OCI-LY7 (cell line): ENCODE measurements at regions of chr4 and their contacts with region 1.

Region 1: DNA sequence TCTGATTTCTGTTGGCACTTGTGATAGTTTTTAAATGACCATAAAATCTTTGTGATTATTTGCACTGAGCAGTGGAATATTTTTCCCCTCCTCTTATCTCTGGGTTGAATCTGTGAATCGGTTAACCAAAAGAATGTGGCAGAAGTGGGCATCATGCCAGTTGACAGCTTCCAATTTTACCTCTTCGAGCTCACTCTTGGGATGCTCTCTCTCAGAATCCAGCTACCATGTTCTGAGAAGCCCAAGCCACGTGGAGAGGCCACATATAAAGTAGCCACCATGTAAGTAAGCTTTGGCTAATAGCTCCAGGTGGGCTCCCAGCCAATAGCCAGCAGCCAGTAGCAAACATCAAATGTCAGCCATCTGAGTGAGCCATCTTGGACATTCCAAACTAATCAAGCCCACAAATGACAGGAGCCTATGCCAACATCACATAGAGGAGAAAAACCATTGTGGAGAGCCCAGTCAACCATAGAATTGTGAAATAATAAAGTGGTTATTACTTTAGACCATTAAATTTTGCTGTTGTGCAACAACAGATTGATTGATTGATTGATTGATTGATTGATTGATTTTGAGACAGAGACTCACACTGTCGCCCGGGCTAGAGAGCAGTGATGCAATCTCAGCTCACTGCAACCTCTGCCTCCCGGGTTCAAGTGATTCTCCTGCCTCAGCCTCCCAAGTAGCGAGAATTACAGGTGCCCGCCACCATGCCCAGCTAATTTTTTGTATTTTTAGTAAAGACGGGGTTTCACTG is 12.7 kb upstream of the WDR19 start:
- DNase-seq: no peak
- H3K4me3 ChIP-seq: no peak overlapping the region
- H3K27ac ChIP-seq: no peak overlapping the region
- H3K4me1 ChIP-seq: peaks cover 50% of the 10 kb centered on the region
- CTCF ChIP-seq: no peak

Region 2: GRCh38 chr4:37994569-37994968 is 1175.0 kb before region 1 on chr4:
- CTCF ChIA-PET with region 1: no interaction called
- POLR2A ChIA-PET with region 1: no interaction called
- intact Hi-C with region 1: loop called (anchors 10 kb)
- DNase-seq: peak; percentile 60
- H3K4me3 ChIP-seq: peak overlapping the region; percentile 61
- H3K27ac ChIP-seq: peak overlapping the region; percentile 75
- H3K4me1 ChIP-seq: peaks cover 98% of the 10 kb centered on the region
- CTCF ChIP-seq: no peak

Region 3: DNA sequence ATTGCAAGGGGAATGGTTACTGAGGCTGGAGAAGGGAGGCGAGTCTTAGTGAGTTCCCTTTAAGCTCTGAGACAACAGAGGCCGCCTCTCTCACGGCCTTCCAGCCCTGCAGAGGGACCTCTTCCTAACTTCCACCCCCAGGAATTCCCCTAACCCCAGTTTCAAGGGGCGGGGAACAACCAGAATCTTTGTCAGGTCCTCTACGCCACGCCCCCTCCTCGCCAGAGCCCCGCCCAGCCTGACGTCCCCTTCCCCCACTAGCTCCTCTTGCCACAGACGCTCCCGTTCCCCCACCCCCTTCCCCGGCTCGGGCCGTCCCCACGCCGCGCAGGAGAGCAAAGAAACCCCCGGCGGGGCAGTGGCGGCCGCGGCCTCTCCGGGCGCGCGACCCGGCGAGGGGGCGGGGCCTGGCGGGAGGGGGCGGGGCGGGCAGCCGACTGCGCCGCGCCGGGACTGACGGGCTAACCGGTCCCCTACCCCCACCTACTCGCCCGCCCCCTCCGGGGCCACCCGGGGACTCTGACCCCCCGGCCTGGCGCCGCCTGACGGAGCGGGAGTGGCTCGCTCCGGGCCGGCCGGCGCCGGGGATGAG is 125.1 kb before region 1 on chr4:
- CTCF ChIA-PET with region 1: interaction called, 3 read pairs
- POLR2A ChIA-PET with region 1: interaction called, 16 read pairs
- intact Hi-C with region 1: no loop called
- DNase-seq: peak; percentile 90
- H3K4me3 ChIP-seq: peak overlapping the region; percentile 75
- H3K27ac ChIP-seq: peak overlapping the region; percentile 60
- H3K4me1 ChIP-seq: peaks cover 57% of the 10 kb centered on the region
- CTCF ChIP-seq: no peak

Region 4: DNA sequence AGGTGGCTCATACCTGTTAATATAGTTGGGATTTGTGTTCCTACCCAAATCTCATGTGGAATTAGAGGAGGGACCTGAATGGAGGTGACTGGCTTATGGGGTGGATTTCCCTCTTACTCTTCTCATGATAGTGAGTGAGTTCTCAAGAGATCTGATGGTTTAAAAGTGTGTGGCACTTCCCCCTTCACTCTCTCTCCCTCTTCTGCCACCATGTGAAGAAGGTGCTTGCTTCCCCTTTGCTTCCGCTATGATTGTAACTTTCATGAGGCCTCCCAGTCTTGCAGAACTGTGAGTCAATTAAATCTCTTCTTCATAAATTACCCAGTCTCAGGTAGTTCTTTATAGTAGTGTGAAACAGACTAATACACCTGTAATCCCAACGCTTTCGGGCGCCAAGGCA is 15.6 kb before region 1 on chr4:
- CTCF ChIA-PET with region 1: no interaction called
- POLR2A ChIA-PET with region 1: interaction called, 30 read pairs
- intact Hi-C with region 1: no loop called
- DNase-seq: no peak
- H3K4me3 ChIP-seq: no peak overlapping the region
- H3K27ac ChIP-seq: no peak overlapping the region
- H3K4me1 ChIP-seq: peaks cover 17% of the 10 kb centered on the region
- CTCF ChIP-seq: no peak

Region 5: DNA sequence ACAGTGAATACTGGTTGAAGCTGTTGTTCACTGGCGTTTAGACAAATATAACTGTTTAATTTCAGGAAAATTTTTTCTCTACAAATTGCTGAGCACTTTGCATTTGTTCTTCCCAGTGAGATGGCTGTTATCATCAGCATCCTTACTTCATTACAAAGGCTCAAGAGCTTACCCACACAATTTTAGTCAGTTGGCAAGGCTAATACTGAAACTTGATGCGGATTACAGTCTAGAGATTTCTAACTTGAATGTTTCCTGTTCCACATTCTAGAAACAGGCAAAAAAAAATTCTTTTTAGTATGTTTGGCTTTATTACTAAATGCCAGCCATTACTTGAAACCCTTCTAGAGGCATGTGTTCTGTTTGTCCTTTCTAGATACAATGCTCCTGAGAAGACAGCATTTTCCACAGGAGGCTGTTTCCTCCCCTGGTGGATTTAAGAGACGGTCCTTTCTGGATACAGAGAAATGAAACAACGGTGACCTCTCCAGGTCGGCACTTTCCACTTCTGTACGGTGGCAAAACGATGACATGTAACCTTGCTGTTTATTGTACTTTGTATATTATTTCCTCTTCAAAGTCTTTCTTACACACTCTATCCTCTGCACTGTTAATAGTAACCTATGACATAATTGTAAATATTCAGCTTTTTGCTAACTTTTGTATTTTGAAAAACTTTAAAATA is 115.6 kb after region 1 on chr4:
- CTCF ChIA-PET with region 1: no interaction called
- POLR2A ChIA-PET with region 1: no interaction called
- intact Hi-C with region 1: no loop called
- DNase-seq: no peak
- H3K4me3 ChIP-seq: no peak overlapping the region
- H3K27ac ChIP-seq: no peak overlapping the region
- H3K4me1 ChIP-seq: no peaks in the 10 kb centered on the region
- CTCF ChIP-seq: no peak

Region 6: GRCh38 chr4:39353478-39354253 is 184.1 kb after region 1 on chr4:
- CTCF ChIA-PET with region 1: no interaction called
- POLR2A ChIA-PET with region 1: interaction called, 4 read pairs
- intact Hi-C with region 1: loop called (anchors 5 kb)
- DNase-seq: peak; percentile 71
- H3K4me3 ChIP-seq: peak overlapping the region; percentile 64
- H3K27ac ChIP-seq: peak overlapping the region; percentile 93
- H3K4me1 ChIP-seq: peaks cover 68% of the 10 kb centered on the region
- CTCF ChIP-seq: no peak